ENCODE measurements at regions of chr14 and their contacts with region 1.

Region 1: GRCh38 chr14:36070031-36070719 is 106.3 kb downstream of the PTCSC3 start:
- DNase-seq: peak; percentile 78
- H3K4me3 Mint-ChIP-seq: peak overlapping the region; percentile 54
- H3K27ac Mint-ChIP-seq: peak overlapping the region; percentile 91
- H3K4me1 Mint-ChIP-seq: peaks cover 20% of the 10 kb centered on the region
- H3K27me3 Mint-ChIP-seq: no peaks in the 10 kb centered on the region
- CTCF ChIP-seq: peak; percentile 73

Region 2: DNA sequence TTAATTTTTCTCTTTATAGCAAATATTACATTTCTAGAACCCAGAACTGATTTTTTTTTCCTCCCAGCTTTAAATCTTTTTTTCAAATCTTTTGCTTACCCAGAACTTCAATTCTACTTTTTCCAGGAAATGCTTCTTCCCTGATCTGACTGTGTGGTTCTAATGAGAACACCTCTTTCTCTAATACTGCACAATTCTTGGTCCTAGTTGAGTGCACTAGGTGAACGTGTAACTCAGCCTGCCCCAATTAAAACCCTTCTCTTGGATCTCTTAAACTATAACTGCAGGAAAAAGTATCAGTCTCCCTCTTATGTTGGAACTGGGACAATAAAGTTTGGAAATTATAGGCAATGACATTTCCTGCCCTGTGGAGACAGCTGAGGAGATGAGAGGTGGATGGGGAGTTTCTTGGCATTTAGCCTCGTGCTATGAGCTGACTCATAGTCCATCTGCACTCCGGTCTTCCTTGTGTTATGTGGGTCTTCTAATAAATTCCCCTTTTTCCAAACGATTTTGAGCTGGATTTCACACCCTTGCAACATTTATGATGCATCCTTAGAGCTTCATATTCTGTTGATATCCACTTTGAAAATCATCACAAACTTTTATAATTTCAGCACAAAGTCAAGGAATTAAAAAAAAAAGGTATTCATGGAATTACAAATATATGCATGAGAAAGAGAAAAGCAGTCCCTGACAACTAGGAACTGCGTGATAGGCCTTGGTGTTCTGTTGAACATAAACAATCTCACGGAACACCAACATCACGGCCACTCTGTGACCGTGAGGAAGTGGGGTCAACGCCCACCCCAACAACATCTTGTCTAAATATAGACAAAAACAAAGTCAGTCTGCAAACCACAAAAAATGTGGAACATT is 191.7 kb before region 1 on chr14:
- CTCF ChIA-PET with region 1: interaction called, 30 read pairs
- intact Hi-C with region 1: loop called (anchors 1 kb)
- DNase-seq: peak; percentile 27
- H3K4me3 Mint-ChIP-seq: no peak overlapping the region
- H3K27ac Mint-ChIP-seq: peak overlapping the region; percentile 68
- H3K4me1 Mint-ChIP-seq: peaks cover 39% of the 10 kb centered on the region
- H3K27me3 Mint-ChIP-seq: no peaks in the 10 kb centered on the region
- CTCF ChIP-seq: no peak

Region 3: DNA sequence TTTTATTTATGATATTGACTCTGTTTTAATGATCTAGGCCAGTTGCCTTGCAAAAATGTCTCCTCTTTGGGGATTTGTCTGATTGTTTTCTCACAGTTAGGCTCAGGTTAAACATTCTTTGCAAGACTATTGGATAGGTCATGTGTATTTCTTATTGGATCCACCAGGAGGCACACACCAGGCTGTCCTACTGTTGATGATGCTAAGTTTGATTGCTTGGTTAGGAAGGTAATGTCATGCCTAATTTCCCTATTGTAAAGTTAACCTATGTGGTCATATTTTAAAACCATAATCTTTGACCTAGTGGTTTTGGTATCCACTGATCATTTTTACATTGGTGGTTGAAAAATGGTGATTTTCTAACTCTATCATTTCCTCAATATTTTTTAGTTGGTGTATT is 107.0 kb before region 1 on chr14:
- CTCF ChIA-PET with region 1: interaction called, 14 read pairs
- intact Hi-C with region 1: loop called (anchors 1 kb)
- DNase-seq: peak; percentile 16
- H3K4me3 Mint-ChIP-seq: no peak overlapping the region
- H3K27ac Mint-ChIP-seq: no peak overlapping the region
- H3K4me1 Mint-ChIP-seq: peaks cover 14% of the 10 kb centered on the region
- H3K27me3 Mint-ChIP-seq: no peaks in the 10 kb centered on the region
- CTCF ChIP-seq: no peak

Region 4: GRCh38 chr14:35998303-35998702 is 71.9 kb before region 1 on chr14:
- CTCF ChIA-PET with region 1: no interaction called
- intact Hi-C with region 1: no loop called
- DNase-seq: no peak
- H3K4me3 Mint-ChIP-seq: no peak overlapping the region
- H3K27ac Mint-ChIP-seq: no peak overlapping the region
- H3K4me1 Mint-ChIP-seq: no peaks in the 10 kb centered on the region
- H3K27me3 Mint-ChIP-seq: no peaks in the 10 kb centered on the region
- CTCF ChIP-seq: no peak

Region 5: GRCh38 chr14:36091096-36091495 is 20.9 kb after region 1 on chr14:
- CTCF ChIA-PET with region 1: interaction called, 22 read pairs
- intact Hi-C with region 1: no loop called
- DNase-seq: peak; percentile 76
- H3K4me3 Mint-ChIP-seq: no peak overlapping the region
- H3K27ac Mint-ChIP-seq: peak overlapping the region; percentile 5
- H3K4me1 Mint-ChIP-seq: peaks cover 23% of the 10 kb centered on the region
- H3K27me3 Mint-ChIP-seq: no peaks in the 10 kb centered on the region
- CTCF ChIP-seq: no peak

Region 6: GRCh38 chr14:36315159-36315853 is 245.1 kb after region 1 on chr14:
- CTCF ChIA-PET with region 1: interaction called, 4 read pairs
- intact Hi-C with region 1: loop called (anchors 1 kb)
- DNase-seq: no peak
- H3K4me3 Mint-ChIP-seq: no peak overlapping the region
- H3K27ac Mint-ChIP-seq: no peak overlapping the region
- H3K4me1 Mint-ChIP-seq: peaks cover 8% of the 10 kb centered on the region
- H3K27me3 Mint-ChIP-seq: no peaks in the 10 kb centered on the region
- CTCF ChIP-seq: no peak

Region 7: DNA sequence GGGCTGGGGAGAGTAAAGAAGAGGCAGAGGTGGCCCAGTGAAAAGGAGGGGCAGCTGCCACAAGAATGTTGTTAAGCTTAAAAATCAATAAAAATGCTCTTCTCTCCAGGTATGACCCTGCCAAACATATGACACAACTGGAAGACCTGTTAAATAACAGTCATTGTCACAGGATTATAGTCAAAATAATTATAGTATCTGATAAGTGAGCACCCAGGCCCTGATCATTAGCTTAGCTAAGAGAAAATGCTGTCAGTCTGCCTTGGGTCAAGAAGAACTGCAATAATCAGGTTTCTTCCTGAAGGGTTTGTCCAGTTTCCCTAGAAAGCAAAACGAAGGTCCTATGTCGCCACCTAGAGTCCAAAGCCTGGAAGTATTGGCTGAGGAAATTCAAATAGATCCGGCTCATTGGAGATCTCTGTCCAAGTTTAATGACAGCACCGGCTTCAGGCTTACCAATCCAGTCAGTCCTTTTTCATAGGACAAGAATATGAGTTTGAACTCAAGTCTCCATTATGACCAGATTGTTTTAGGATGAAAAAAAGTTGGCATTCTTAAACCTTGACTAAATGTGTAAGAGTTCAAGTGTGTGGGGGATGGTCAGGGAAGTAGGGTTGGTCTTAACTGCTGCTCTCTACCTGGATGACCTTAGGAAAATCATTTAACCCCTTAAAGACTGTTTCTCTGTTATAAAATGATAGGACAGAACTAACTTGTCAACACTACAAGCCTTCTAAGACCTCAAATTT is 534.8 kb after region 1 on chr14:
- CTCF ChIA-PET with region 1: interaction called, 6 read pairs
- intact Hi-C with region 1: loop called (anchors 1 kb)
- DNase-seq: peak; percentile 68
- H3K4me3 Mint-ChIP-seq: no peak overlapping the region
- H3K27ac Mint-ChIP-seq: no peak overlapping the region
- H3K4me1 Mint-ChIP-seq: peaks cover 12% of the 10 kb centered on the region
- H3K27me3 Mint-ChIP-seq: peaks cover 20% of the 10 kb centered on the region
- CTCF ChIP-seq: peak; percentile 52

Measured in Calu3 (cell line).